Head of caudate nucleus (tissue), 42 donors: ENCODE measurements at regions of chr3 and their contacts with region 1.

Region 1: DNA sequence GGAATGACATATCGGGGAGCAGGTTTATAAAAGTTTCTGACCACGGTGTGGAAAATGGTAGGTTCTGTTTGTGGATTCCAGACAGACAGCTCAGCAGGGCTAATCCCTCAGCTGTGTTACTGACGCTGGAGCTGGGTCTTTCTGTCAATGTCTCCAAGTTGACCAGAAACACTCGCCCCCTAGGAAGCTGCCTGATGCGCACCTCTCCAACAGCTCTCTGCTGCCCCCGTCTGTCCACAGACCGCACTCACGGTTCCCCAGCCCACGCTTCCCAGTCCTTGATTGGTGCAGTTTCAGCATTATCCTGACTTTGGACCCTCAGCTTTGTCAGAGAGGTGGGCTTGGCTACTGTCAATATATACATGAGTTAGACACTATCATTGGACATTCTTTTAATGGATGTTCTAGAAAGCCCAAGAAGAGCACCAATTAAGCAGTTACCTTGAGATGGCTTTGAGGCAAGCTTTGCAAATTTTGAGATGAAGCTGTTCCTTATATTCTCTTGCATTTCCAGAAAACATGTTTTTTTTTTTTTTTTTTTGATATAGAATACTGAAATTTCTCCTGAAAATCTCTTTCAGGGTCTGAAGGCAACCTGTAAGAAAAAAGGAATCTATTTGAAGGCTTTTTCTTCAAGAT is 98.9 kb upstream of the TBC1D5 start:
- DNase-seq: peak; percentile 63 to 94 (median 83)

Region 2: GRCh38 chr3:17258823-17259436 is 582.4 kb before region 1 on chr3:
- intact Hi-C with region 1: loop called (anchors 10 kb)
- DNase-seq: peak in 8 of 42 donors; percentile 12 to 63 (median 29)

Region 3: GRCh38 chr3:17431004-17431403 is 410.3 kb before region 1 on chr3:
- intact Hi-C with region 1: loop called (anchors 5 kb)
- DNase-seq: no peak